AG04449 (cell line): ENCODE measurements at regions of chr16 and their contacts with region 1.

Region 1: GRCh38 chr16:67865316-67865715 is 7.5 kb upstream of the EDC4 start:
- DNase-seq: no peak
- H3K4me3 ChIP-seq: no peak overlapping the region
- CTCF ChIP-seq: peak; percentile 49

Region 2: DNA sequence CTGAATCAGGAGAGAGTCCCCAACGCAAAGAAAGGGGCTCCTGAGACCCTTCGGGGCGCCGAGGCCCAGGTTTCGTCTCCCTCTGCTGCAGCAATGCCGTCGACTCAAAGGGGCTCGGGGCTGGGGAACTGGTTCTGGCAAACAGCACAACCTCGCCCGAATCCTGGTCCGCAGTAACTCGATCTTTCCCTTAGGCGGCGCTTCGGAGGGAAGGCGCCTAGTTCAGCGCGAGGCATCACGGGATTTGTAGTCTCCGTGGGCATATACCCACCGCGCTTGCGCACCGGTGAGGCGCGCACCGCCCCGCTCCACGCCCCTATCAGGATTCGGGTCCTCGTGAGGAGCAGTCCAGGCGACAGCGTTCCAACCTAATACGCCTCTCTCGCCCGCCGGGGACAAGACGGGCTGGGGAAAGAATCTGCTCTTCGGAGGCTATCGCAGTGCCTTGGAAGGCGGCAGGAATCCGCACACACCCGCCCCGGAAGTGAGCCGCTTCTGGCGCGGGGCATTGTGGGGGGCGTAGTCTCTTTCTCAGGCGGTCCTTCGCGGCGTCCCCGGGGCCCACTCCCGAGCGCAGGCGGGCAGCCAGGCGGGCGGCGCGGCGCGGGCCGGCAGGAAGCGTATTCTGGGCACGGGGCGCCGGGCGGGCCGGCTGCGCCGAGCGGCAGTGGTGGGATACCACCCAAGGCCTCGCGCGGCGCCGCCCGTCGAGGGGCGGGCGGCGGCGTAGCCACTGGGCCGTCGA is 23.4 kb before region 1 on chr16 and contains the start of gene THAP11:
- CTCF ChIA-PET with region 1: interaction called, 21 read pairs
- POLR2A ChIA-PET with region 1: interaction called, 5 read pairs
- DNase-seq: no peak
- H3K4me3 ChIP-seq: peak within 1 kb of the TSS; percentile 97
- CTCF ChIP-seq: peak; percentile 90

Region 3: GRCh38 chr16:68031951-68032350 is 166.6 kb after region 1 on chr16:
- CTCF ChIA-PET with region 1: no interaction called
- POLR2A ChIA-PET with region 1: no interaction called
- DNase-seq: no peak
- H3K4me3 ChIP-seq: no peak overlapping the region
- CTCF ChIP-seq: no peak